Activated B cell treated with CpG ODN at 0.5 μM for 24 hours (primary cell): ENCODE measurements at regions of chr3 and their contacts with region 1.

Region 1: GRCh38 chr3:39288300-39288808 is 8.5 kb upstream of the CX3CR1 start:
- DNase-seq: peak; percentile 75
- ATAC-seq: peak; percentile 99
- H3K4me3 Mint-ChIP-seq: no peak overlapping the region
- H3K27ac Mint-ChIP-seq: peak overlapping the region; percentile 6
- H3K4me1 Mint-ChIP-seq: peaks cover 31% of the 10 kb centered on the region
- H3K27me3 Mint-ChIP-seq: peaks cover 4% of the 10 kb centered on the region
- CTCF ChIP-seq: peak; percentile 50

Region 2: DNA sequence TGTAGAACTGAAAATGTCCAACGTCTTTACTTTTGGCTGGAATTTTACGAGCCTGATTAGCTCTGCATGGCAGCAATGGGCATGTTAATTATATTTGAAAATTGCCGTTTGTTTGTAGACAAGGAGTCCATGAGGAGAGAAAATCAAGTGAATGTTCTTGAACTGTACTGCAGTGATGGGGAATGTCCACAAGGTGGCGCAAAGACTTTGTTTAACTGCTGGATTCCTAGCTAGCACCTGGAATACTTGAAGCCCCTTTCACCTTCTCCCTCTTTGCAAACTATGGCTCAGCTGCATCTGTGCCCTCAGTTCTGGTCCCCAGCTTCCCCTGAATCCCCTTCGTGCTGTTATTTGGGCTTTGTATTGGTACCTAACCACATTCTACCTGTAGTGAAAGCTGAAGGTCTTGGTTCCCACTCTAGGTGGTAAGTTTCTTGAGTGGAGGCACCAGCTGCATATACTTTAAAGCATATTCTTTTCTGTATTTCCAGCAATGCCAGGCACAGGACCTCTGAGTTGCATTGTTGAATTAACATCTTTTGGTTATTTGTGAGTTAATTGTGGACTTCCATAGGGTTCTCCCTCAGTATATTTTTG is 766.9 kb before region 1 on chr3:
- CTCF ChIA-PET with region 1: interaction called, 29 read pairs
- POLR2A ChIA-PET with region 1: no interaction called
- intact Hi-C with region 1: loop called (anchors 1 kb)
- DNase-seq: no peak
- ATAC-seq: peak; percentile 72
- H3K4me3 Mint-ChIP-seq: no peak overlapping the region
- H3K27ac Mint-ChIP-seq: no peak overlapping the region
- H3K4me1 Mint-ChIP-seq: peaks cover 13% of the 10 kb centered on the region
- H3K27me3 Mint-ChIP-seq: no peaks in the 10 kb centered on the region
- CTCF ChIP-seq: peak; percentile 80

Region 3: DNA sequence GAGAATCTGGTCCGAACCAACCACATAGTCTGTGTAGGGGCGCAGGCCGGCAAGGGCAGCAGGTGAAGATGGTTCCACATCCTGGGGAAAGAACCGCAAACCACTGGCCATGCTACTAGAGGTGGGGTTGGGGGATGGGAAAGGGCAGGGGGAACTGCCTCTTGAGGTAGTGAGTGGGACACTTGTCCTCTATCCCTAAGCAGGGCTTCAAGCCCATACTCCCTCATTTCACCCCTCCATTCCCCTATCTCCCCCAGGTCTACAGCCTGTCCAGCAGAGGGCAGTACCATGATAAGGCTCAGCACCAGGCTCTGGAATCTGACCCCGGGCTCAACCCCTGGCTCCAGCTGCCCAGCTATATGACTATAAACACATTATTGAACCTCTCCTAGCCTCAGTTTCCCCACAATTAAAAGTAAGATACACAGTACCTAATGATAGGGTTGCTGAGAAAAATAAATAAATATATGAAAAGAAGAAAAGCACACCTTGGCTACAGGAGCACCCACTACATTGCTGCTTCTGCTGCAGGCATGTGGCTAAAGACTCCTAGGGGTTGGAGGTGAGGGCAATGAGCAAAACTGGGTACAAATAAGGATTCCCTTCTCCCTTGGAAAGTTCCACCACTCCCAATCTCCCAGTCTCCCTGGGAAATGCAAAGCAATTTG is 187.2 kb before region 1 on chr3:
- CTCF ChIA-PET with region 1: interaction called, 19 read pairs
- POLR2A ChIA-PET with region 1: interaction called, 5 read pairs
- intact Hi-C with region 1: loop called (anchors 1 kb)
- DNase-seq: no peak
- ATAC-seq: peak; percentile 90
- H3K4me3 Mint-ChIP-seq: no peak overlapping the region
- H3K27ac Mint-ChIP-seq: no peak overlapping the region
- H3K4me1 Mint-ChIP-seq: peaks cover 42% of the 10 kb centered on the region
- H3K27me3 Mint-ChIP-seq: no peaks in the 10 kb centered on the region
- CTCF ChIP-seq: peak; percentile 44

Region 4: GRCh38 chr3:39189959-39190269 is 98.4 kb before region 1 on chr3:
- CTCF ChIA-PET with region 1: interaction called, 585 read pairs
- POLR2A ChIA-PET with region 1: interaction called, 39 read pairs
- intact Hi-C with region 1: loop called (anchors 1 kb)
- DNase-seq: peak; percentile 44
- ATAC-seq: peak; percentile 87
- H3K4me3 Mint-ChIP-seq: no peak overlapping the region
- H3K27ac Mint-ChIP-seq: no peak overlapping the region
- H3K4me1 Mint-ChIP-seq: peaks cover 18% of the 10 kb centered on the region
- H3K27me3 Mint-ChIP-seq: no peaks in the 10 kb centered on the region
- CTCF ChIP-seq: no peak

Region 5: DNA sequence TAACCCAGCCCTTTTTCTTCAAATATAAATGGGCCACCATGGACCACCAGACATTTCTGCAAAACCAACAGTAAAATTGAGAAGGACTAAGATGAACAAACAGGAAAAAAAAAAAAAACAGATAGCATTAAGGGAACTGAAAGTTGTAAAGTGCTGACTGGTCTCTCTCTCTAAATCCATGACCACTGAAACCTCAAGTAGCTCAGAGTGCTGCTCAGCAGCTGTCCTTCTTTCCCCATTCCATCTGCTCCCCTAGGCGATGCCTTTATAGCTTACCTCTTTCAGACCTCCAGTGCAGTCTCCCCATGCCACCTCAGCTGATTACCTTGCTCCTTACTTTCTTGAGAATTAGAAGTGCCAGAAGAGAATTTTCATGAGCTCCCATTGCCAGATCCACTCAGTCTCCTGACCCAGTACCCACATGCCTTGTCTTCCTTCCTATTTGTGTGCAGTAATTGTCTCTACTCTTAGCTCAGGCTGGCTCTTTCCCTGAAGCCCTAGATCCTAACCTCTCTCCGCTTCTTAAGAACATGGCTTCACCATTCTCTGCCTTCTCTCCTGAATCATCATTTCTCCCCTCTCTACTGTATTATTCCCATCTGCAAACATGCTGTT is 72.1 kb before region 1 on chr3:
- CTCF ChIA-PET with region 1: interaction called, 209 read pairs
- POLR2A ChIA-PET with region 1: interaction called, 6 read pairs
- intact Hi-C with region 1: loop called (anchors 2 kb)
- DNase-seq: no peak
- ATAC-seq: peak; percentile 94
- H3K4me3 Mint-ChIP-seq: peak overlapping the region; percentile 52
- H3K27ac Mint-ChIP-seq: peak overlapping the region; percentile 50
- H3K4me1 Mint-ChIP-seq: peaks cover 30% of the 10 kb centered on the region
- H3K27me3 Mint-ChIP-seq: peaks cover 3% of the 10 kb centered on the region
- CTCF ChIP-seq: no peak

Region 6: DNA sequence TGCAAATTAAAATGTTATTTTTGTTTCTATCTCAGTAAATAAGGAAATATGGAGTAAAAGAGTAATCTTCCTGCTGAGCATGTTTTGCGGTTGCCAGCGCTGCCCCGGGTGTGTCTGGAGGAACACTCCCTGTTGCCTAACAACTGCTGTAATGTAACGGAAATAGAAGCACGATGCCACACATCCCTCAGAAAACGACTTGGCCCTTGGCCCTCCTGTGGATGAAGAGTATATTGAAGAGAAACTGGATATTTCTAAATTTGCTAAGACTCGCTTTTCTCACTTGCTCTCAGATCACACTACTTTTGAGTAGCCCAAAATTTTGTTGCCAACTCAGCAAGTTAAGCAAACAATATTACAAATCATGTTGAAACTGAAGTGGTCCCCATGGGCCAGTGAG is 27.4 kb before region 1 on chr3:
- CTCF ChIA-PET with region 1: interaction called, 44 read pairs
- POLR2A ChIA-PET with region 1: interaction called, 29 read pairs
- intact Hi-C with region 1: loop called (anchors 1 kb)
- DNase-seq: no peak
- ATAC-seq: peak; percentile 62
- H3K4me3 Mint-ChIP-seq: peak overlapping the region; percentile 52
- H3K27ac Mint-ChIP-seq: peak overlapping the region; percentile 43
- H3K4me1 Mint-ChIP-seq: peaks cover 76% of the 10 kb centered on the region
- H3K27me3 Mint-ChIP-seq: no peaks in the 10 kb centered on the region
- CTCF ChIP-seq: no peak

Region 7: DNA sequence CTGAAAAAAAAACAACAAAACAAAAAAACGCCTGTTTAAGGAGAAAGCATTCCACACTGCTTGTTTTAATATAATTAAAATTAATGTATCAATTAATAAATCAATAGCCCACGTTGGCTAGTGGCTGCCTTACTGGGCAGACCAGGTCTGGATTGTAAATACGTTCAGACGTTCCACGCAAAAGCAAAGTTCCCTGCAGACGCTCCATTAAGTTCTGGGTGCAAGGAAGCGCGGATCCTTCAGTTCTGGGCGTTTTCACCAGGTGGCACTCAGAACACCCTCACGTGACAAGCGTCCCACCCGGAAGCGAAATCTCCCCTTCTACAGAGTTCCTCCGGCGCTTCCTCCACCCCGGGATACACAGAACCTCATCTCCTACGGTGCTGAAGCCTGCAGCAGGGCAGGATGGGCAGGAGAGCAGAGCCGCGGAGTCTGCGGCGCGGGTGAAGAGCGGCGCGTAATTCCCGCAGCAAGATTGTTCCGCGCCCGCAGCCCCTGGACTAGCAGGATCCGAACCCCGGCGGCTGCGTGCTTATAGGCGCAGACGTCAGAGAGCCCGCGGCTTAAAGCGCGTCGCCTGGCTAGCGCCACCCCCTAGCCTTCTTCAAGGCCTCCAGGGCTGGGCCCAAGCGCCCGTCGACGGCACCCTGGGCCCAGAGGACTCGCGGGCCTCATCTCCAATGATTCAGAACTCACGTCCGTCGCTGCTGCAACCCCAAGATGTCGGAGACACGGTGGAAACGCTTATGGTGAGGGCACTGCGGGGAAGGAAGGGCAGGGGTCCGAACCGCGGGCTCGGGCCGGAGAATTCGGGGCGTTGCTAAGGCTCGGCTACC is 94.9 kb after region 1 on chr3 and contains the start of gene SLC25A38:
- CTCF ChIA-PET with region 1: interaction called, 10 read pairs
- POLR2A ChIA-PET with region 1: interaction called, 6 read pairs
- intact Hi-C with region 1: loop called (anchors 1 kb)
- DNase-seq: peak; percentile 72
- ATAC-seq: peak; percentile 73
- H3K4me3 Mint-ChIP-seq: peak within 1 kb of the TSS; percentile 99
- H3K27ac Mint-ChIP-seq: peak within 1 kb of the TSS; percentile 100
- H3K4me1 Mint-ChIP-seq: peaks cover 49% of the 10 kb centered on the region
- H3K27me3 Mint-ChIP-seq: no peaks in the 10 kb centered on the region
- CTCF ChIP-seq: no peak
- total RNA-seq, gene SLC25A38: 51.6 and 52.9 TPM in 2 replicates

Region 8: DNA sequence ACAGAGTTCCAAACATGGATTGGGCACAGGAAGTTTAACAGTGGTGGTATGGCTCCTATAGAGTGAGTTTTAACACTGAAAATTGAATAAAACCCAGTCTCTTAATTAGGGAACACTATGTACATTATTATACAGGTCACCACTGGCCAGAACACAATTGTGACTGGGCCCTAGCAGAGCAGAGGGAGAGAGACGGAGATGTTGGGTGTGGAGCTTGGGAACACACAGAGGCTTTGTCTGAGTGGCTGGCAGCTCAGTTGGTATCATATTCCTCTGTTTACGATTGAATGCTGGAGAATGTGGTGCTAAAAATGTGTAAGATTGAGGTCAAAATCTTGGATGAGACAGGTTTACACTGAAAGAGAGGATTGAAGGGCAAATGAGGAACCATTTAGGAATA is 172.3 kb after region 1 on chr3:
- CTCF ChIA-PET with region 1: no interaction called
- POLR2A ChIA-PET with region 1: no interaction called
- intact Hi-C with region 1: no loop called
- DNase-seq: no peak
- ATAC-seq: no peak
- H3K4me3 Mint-ChIP-seq: no peak overlapping the region
- H3K27ac Mint-ChIP-seq: no peak overlapping the region
- H3K4me1 Mint-ChIP-seq: no peaks in the 10 kb centered on the region
- H3K27me3 Mint-ChIP-seq: peaks cover 10% of the 10 kb centered on the region
- CTCF ChIP-seq: no peak